ENCODE measurements at regions of chr12 and their contacts with region 1.

Region 1: DNA sequence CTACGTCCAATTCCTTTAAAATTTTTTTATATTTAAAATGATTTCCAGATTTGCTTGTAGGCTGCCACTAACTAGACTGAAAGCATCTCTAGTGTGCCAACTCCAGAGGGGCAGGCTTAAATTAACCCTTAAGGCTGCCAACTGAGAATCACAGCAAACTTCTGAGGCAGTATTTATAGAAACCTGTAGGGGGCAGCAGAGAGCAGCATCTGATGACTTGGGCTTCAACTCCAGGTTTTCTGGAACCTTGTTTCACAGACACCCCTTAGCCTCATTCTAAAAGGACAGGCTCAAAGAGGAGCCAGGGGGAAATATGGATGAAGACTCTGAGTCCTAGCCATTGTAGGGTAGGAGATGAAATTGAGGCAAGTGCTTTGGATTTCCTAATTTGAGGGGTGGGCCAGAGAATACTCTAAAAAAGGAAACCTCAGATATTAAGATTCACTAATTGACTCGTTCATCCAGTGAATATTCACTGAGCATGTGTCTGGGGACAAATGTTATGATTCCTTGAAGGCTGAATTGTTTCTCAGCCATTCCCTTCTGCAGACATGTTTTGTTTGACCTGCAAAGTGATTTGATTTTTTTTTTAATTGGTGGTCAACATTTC is 63.3 kb upstream of the HSPB8 start:
- DNase-seq: peak in 1 of 2 donors; percentile 23
- ATAC-seq: peak; percentile 46 to 84
- H3K4me3 ChIP-seq: no peak overlapping the region
- H3K27ac ChIP-seq: no peak overlapping the region
- H3K4me1 ChIP-seq: peaks cover 7 to 15% of the 10 kb centered on the region in 2 donors
- H3K27me3 ChIP-seq: peaks cover 0 to 4% (median 3%) of the 10 kb centered on the region in 3 donors
- CTCF ChIP-seq: peak; percentile 82 to 96 (median 94)
- POLR2A ChIP-seq: no peak

Region 2: GRCh38 chr12:119249326-119250155 is 134.1 kb after region 1 on chr12:
- in situ Hi-C with region 1: loop called in 1 of 4 experiments (anchors 25 kb)
- intact Hi-C with region 1: loop called (anchors 5 kb)
- DNase-seq: no peak
- ATAC-seq: no peak
- H3K4me3 ChIP-seq: no peak overlapping the region
- H3K27ac ChIP-seq: peak overlapping the region in 2 of 4 donors; percentile 3 to 26
- H3K4me1 ChIP-seq: peaks cover 23 to 28% of the 10 kb centered on the region in 2 donors
- H3K27me3 ChIP-seq: no peaks in the 10 kb centered on the region
- CTCF ChIP-seq: no peak
- POLR2A ChIP-seq: no peak

Region 3: DNA sequence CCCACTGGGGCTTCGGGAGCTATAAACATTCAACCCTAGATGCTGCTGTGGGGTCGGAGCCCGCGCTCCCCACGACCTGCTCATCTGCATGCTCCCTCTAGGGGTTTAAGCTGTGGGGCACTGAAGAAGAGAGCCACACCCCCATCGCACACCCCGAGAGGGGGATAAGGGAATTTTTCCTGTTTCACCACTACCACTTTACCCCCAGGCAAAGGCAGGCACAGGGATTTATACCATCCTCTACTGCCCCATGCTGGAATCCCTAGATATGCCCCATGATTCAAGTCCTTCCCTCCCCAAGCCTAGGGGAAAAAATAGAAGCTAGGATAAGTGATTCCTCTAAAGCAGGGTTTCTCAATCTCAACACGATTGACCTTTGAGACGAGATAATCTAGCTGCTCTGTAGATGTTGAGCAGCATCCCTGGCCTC is 159.2 kb after region 1 on chr12:
- in situ Hi-C with region 1: loop called in 1 of 4 experiments (anchors 25 kb)
- intact Hi-C with region 1: loop called (anchors 1 kb)
- DNase-seq: no peak
- ATAC-seq: peak in 1 of 2 donors; percentile 74
- H3K4me3 ChIP-seq: no peak overlapping the region
- H3K27ac ChIP-seq: no peak overlapping the region
- H3K4me1 ChIP-seq: no peaks in the 10 kb centered on the region
- H3K27me3 ChIP-seq: no peaks in the 10 kb centered on the region
- CTCF ChIP-seq: peak in 3 of 5 experiments; percentile 25 to 39 (median 33)
- POLR2A ChIP-seq: no peak

Region 4: GRCh38 chr12:119412811-119413794 is 297.7 kb after region 1 on chr12:
- in situ Hi-C with region 1: loop called (anchors 5 to 10 kb)
- intact Hi-C with region 1: loop called (anchors 1 kb)
- DNase-seq: peak; percentile 23 to 53
- ATAC-seq: peak in 1 of 2 donors; percentile 84
- H3K4me3 ChIP-seq: no peak overlapping the region
- H3K27ac ChIP-seq: no peak overlapping the region
- H3K4me1 ChIP-seq: no peaks in the 10 kb centered on the region
- H3K27me3 ChIP-seq: no peaks in the 10 kb centered on the region
- CTCF ChIP-seq: peak; percentile 72 to 89 (median 81)
- POLR2A ChIP-seq: no peak

Region 5: DNA sequence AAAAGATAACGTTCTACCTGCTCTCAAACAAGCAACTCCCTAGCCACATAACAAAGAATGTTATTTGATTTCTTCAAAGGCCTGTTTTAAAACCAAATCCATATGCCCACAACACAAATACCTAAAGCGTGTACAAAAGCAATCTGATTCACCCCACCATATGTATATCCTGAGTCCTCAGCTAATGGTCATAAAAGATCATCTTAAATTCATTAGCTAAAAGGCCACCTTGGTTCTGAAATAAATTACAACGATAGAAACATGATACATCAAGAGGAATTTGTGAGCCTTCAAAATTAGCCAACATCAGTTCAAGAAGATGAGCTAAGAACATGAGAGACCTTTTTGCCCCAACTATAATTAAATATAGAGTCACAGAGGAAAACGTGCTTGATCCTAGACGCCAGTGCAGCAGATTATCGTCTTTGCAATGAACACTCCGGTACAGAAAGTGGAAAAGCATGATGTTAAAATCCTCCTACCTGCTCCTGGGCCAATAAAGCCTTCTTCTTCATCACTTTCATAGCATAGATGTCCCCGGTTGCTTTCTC is 741.7 kb after region 1 on chr12:
- in situ Hi-C with region 1: no loop called
- intact Hi-C with region 1: no loop called
- DNase-seq: no peak
- ATAC-seq: no peak
- H3K4me3 ChIP-seq: no peak overlapping the region
- H3K27ac ChIP-seq: no peak overlapping the region
- H3K4me1 ChIP-seq: no peaks in the 10 kb centered on the region
- H3K27me3 ChIP-seq: no peaks in the 10 kb centered on the region
- CTCF ChIP-seq: no peak
- POLR2A ChIP-seq: no peak

Measured in gastrocnemius medialis (tissue), 4 donors.